ENCODE measurements at regions of chr1 and their contacts with region 1.

Region 1: DNA sequence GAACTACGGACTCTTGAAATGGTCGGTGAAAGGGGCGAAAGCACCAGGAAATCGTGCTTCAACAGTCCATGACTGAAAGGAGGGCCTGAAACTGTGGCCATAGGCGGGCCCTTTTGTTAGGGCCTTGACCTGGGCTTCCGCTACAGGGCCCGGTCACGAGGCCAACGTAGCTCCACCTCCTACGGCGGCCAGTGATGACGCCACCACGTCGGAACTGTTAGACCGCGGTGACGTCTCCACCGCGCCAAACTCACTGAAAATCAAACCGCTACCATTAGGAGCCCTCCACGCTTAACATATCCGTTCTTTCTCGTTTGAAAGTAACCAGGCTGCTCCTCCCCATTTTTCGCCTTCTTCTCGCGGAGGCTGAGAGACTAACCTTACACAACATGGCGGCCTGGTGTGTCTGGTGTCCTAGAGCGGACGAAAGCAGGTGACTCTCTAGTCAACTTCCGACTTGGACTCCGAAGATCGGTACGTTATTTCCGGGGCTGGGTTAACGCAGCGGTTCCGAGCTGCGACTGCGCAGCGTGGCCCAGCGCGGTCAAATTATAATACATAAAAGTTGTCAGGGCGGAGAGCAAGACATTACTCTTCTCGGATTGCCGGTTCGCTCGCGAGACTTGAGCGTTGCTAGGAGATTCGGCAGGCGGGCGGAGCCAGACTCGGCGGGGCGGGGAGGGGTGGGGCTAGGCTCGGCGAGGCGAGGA is 376 bp upstream of the CACYBP start:
- DNase-seq: peak; percentile 99
- H3K4me3 Mint-ChIP-seq: no peak overlapping the region
- H3K27ac Mint-ChIP-seq: no peak overlapping the region
- H3K4me1 Mint-ChIP-seq: peaks cover 37% of the 10 kb centered on the region
- H3K27me3 Mint-ChIP-seq: no peaks in the 10 kb centered on the region

Region 2: DNA sequence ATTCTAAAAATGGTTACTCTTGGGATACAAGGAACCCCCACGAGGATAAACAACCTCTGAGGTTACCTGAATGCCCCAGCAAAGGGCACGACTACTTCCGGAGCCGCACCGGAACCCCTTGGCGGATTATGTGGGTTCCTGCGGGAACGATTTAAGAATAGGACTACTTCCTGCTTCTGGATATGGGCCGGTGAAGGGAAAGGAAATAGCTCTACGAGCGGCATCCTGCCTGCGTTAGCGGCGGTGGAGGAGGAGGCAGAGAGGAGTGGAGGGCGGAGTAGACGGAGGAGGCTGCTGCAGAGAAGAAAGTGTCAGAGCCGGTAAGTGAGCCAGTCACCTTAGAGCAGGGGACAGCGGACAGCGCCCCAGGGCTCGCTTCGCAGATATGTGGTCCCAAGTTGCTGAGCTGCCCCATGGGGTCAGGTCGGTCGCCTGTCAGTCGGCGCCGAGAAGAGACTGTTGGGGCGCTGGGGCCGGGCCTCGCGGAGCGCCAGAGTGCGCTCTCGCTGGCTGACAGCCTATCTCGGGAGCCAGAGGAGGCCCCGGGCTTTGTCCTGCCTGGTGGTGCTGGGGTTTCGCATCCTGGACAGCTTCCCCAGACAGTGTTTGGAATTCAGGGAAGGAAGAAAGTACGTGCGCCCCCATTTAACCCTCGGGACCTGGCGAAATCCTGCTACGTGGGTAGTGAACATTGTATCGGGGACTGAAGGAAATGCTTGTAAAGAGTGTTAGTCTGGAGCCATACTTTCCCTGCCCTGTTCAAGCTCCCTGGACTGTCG is 1284.4 kb before region 1 on chr1 and contains the start of gene KLHL20:
- intact Hi-C with region 1: loop called (anchors 1 kb)
- DNase-seq: peak; percentile 96
- H3K4me3 Mint-ChIP-seq: peak within 1 kb of the TSS; percentile 96
- H3K27ac Mint-ChIP-seq: peak within 1 kb of the TSS; percentile 95
- H3K4me1 Mint-ChIP-seq: peaks cover 18% of the 10 kb centered on the region
- H3K27me3 Mint-ChIP-seq: peaks cover 23% of the 10 kb centered on the region
- total RNA-seq, gene KLHL20: 15.4 and 17.1 TPM in 2 replicates

Region 3: GRCh38 chr1:173867753-173868265 is 1131.6 kb before region 1 on chr1 and contains the start of gene GAS5:
- intact Hi-C with region 1: loop called (anchors 1 kb)
- DNase-seq: peak; percentile 100
- H3K4me3 Mint-ChIP-seq: peak within 1 kb of the TSS; percentile 92
- H3K27ac Mint-ChIP-seq: peak within 1 kb of the TSS; percentile 99
- H3K4me1 Mint-ChIP-seq: peaks cover 57% of the 10 kb centered on the region
- H3K27me3 Mint-ChIP-seq: no peaks in the 10 kb centered on the region
- total RNA-seq, gene GAS5: 695 and 703 TPM in 2 replicates

Region 4: GRCh38 chr1:174769961-174770549 is 229.3 kb before region 1 on chr1:
- intact Hi-C with region 1: loop called (anchors 1 kb)
- DNase-seq: peak; percentile 75
- H3K4me3 Mint-ChIP-seq: no peak overlapping the region
- H3K27ac Mint-ChIP-seq: no peak overlapping the region
- H3K4me1 Mint-ChIP-seq: peaks cover 8% of the 10 kb centered on the region
- H3K27me3 Mint-ChIP-seq: no peaks in the 10 kb centered on the region

Region 5: GRCh38 chr1:175023043-175023921 is 23.9 kb after region 1 on chr1 and contains the start of gene MRPS14:
- intact Hi-C with region 1: loop called (anchors 1 kb)
- DNase-seq: peak; percentile 99
- H3K4me3 Mint-ChIP-seq: peak within 1 kb of the TSS; percentile 91
- H3K27ac Mint-ChIP-seq: peak within 1 kb of the TSS; percentile 90
- H3K4me1 Mint-ChIP-seq: peaks cover 23% of the 10 kb centered on the region
- H3K27me3 Mint-ChIP-seq: no peaks in the 10 kb centered on the region
- total RNA-seq, gene MRPS14: 28.9 and 33.5 TPM in 2 replicates

Region 6: GRCh38 chr1:175035865-175036264 is 36.5 kb after region 1 on chr1:
- intact Hi-C with region 1: no loop called
- DNase-seq: no peak
- H3K4me3 Mint-ChIP-seq: no peak overlapping the region
- H3K27ac Mint-ChIP-seq: no peak overlapping the region
- H3K4me1 Mint-ChIP-seq: peaks cover 2% of the 10 kb centered on the region
- H3K27me3 Mint-ChIP-seq: peaks cover 24% of the 10 kb centered on the region

Measured in activated CD4-positive, alpha-beta T cell treated with anti-CD3 and anti-CD28 coated beads, Interleukin-2, amount 10 ng/mL, durations not matched to agents 24 days and 14 days (primary cell).